ENCODE measurements at regions of chr17 and their contacts with region 1.

Region 1: GRCh38 chr17:40664582-40665333 is at the start of gene KRT222:
- DNase-seq: peak in 1 of 14 experiments; percentile 3
- ATAC-seq: no peak
- H3K4me3 ChIP-seq: no peak within 1 kb of the TSS
- H3K4me3 Mint-ChIP-seq: no peak within 1 kb of the TSS
- H3K27ac ChIP-seq: no peak within 1 kb of the TSS
- H3K27ac Mint-ChIP-seq: no peak within 1 kb of the TSS
- H3K4me1 ChIP-seq: peaks cover 5% of the 10 kb centered on the region
- H3K4me1 Mint-ChIP-seq: peaks cover 11% of the 10 kb centered on the region
- H3K27me3 ChIP-seq: peaks cover 7 to 20% of the 10 kb centered on the region in 2 experiments
- H3K27me3 Mint-ChIP-seq: peaks cover 41% of the 10 kb centered on the region
- CTCF ChIP-seq: no peak
- total RNA-seq, gene KRT222: not detected

Region 2: DNA sequence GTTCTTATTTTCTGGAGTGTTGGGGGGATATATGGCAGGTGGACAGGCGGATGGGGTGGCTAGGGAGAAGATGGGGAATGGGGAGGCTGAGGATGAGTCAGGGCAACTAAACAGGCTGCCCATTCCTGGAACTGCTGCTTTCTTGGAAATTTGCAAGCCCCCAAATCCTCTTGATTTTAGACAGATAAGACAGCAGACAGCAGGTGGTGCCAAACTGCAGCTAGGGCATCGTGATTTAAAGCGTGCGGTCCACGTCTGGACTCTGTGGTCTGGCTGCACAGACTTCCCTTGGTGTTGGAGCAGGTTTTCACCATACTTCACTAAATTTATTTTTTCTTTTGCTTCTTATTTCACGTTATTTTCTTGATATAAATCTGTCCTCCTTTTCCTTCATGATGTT is 49.7 kb after region 1 on chr17:
- CTCF ChIA-PET with region 1: no interaction called
- POLR2A ChIA-PET with region 1: no interaction called
- intact Hi-C with region 1: loop called in 1 of 2 experiments (anchors 5 kb)
- DNase-seq: no peak
- ATAC-seq: no peak
- H3K4me3 ChIP-seq: no peak overlapping the region
- H3K4me3 Mint-ChIP-seq: no peak overlapping the region
- H3K27ac ChIP-seq: no peak overlapping the region
- H3K27ac Mint-ChIP-seq: no peak overlapping the region
- H3K4me1 ChIP-seq: no peaks in the 10 kb centered on the region
- H3K4me1 Mint-ChIP-seq: no peaks in the 10 kb centered on the region
- H3K27me3 ChIP-seq: no peaks in the 10 kb centered on the region
- H3K27me3 Mint-ChIP-seq: peaks cover 23% of the 10 kb centered on the region
- CTCF ChIP-seq: no peak

Region 3: DNA sequence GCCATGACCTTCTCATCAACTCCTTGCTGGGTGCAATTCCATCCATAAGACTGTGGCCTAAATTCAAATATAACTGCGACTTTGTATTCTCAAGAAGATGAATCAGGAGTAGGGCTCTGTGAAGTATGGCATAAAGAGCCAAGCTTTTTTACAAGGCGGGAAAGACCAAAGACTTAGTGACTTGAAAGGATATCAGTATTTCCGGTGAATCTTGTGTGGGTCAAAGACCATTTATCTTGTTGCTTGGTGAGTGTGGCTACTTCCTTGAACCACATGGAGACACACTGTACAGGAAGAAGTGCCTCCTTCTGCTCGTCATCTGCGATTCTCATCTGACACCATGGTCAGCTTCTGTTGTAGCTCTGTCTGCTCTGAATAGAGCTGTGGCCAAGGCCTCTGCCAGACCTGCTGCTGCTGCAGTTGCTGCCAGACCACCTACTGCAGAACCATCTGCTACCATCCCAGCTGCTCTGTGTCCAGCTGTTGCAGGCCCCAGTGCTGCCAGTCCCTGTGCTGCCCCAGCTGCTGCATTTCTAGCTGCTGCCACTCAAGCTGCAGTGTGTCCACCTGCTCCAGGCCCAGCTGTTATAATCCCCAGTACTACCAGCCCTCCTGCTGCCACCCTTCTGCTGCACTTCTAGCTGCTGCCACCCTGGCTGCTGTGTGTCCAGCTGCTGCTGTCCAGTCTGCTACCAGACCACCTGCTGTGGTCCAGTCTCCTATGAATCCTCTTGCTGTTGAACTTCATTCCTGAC is 407.0 kb after region 1 on chr17:
- CTCF ChIA-PET with region 1: no interaction called
- POLR2A ChIA-PET with region 1: no interaction called
- intact Hi-C with region 1: no loop called
- DNase-seq: no peak
- ATAC-seq: no peak
- H3K4me3 ChIP-seq: no peak overlapping the region
- H3K4me3 Mint-ChIP-seq: no peak overlapping the region
- H3K27ac ChIP-seq: no peak overlapping the region
- H3K27ac Mint-ChIP-seq: no peak overlapping the region
- H3K4me1 ChIP-seq: no peaks in the 10 kb centered on the region
- H3K4me1 Mint-ChIP-seq: no peaks in the 10 kb centered on the region
- H3K27me3 ChIP-seq: no peaks in the 10 kb centered on the region
- H3K27me3 Mint-ChIP-seq: peaks cover 24% of the 10 kb centered on the region
- CTCF ChIP-seq: no peak

Measured in CD4-positive, alpha-beta T cell (primary cell).